Breast epithelium (tissue), 4 donors: ENCODE measurements at regions of chr6 and their contacts with region 1.

Region 1: GRCh38 chr6:16625291-16626265 is 135.7 kb downstream of the ATXN1 start:
- DNase-seq: no peak
- H3K4me3 ChIP-seq: no peak overlapping the region
- H3K27ac ChIP-seq: no peak overlapping the region
- H3K4me1 ChIP-seq: no peaks in the 10 kb centered on the region
- H3K27me3 ChIP-seq: no peaks in the 10 kb centered on the region
- CTCF ChIP-seq: no peak
- POLR2A ChIP-seq: no peak

Region 2: DNA sequence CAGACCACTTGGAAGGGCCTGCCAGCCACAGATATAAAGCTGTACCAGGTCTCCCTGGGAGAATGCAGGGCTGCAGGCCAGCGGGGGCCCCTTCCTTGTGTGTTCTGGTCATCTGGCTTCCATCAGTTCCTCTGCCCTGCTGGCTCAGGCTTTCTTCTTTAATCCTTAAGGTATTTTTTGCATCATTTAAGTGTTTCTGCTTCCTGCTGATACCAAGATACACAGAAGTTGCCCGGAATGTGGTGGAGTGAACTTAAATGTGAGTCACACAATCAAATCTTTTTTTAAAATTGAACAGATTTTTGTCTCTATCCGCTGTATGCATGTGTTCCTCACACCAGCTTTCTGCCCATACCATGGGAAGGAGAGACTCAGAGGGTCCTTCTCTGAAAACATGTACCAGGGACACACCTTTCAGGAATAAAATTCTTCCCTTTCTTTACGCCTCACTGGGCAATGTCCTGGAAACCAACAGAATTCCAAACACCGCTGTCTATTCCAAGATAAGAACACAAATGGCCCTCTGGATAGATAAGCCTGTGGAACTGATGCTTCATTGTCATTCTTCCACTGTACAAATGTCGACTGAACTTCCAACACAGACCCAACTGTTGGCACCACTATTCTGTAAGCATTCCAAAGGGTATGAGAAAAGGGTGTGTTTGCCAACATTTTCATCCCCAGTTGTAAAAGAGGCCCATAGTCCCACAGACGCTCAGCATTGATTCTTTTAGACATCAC is 702.9 kb before region 1 on chr6:
- intact Hi-C with region 1: loop called (anchors 10 kb)
- DNase-seq: no peak
- H3K4me3 ChIP-seq: no peak overlapping the region
- H3K27ac ChIP-seq: no peak overlapping the region
- H3K4me1 ChIP-seq: no peaks in the 10 kb centered on the region
- H3K27me3 ChIP-seq: no peaks in the 10 kb centered on the region
- CTCF ChIP-seq: no peak
- POLR2A ChIP-seq: no peak